Activated T-helper 1 cell treated with anti-CD3 and anti-CD28 coated beads, Interleukin-12 subunit alpha, Interleukin-12 subunit beta, Interleukin-2, Interleukin-4 antibody, amounts not matched to agents 30 ng/mL and 10 ng/mL and 1 ng/mL, durations not matched to agents 14 hours and 24 hours and 36 hours (primary cell): ENCODE measurements at regions of chr12 and their contacts with region 1.

Region 1: DNA sequence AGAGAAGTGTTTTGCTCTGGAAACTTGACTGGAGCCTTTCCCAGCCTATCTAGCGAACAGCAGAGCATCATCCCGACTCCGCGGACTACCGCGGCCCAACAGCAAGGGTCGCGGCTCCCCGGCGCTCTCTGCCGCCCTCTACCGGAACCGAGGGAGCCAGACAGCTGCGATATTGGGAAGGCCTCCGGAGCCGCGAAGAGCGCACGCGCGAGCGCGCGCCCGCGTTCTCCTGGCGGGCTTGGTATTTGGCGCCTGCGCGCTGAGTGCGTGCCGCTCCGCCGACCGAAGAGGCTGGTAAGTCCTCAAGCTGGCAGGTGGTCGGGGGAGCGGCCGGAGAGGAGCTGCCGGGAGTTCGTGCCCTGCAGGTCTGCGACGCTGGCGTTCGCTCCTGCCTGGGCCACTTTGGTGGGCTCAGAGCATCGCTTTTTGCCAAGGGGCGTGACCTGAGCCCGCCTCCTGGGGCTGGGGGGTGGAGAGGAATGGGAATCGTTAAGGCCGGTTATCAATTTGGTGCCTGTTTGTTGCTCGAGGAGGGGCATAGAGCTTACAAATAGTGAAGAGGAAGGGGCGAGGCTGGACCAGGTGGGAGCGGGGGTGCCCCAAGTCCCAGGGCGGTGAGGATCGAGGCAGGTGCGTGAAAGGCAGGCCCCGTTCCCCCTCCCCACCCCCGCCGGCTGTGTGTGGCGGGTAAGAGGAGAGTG is at the start of gene TMEM106C:
- DNase-seq: peak; percentile 90
- H3K4me3 Mint-ChIP-seq: peak within 1 kb of the TSS; percentile 99
- H3K27ac Mint-ChIP-seq: peak within 1 kb of the TSS; percentile 86
- H3K4me1 Mint-ChIP-seq: peaks cover 41% of the 10 kb centered on the region
- H3K27me3 Mint-ChIP-seq: peaks cover 17% of the 10 kb centered on the region
- total RNA-seq, gene TMEM106C: 139 and 143 TPM in 2 replicates

Region 2: GRCh38 chr12:47742253-47742825 is 221.2 kb before region 1 on chr12:
- intact Hi-C with region 1: loop called (anchors 1 kb)
- DNase-seq: peak; percentile 61
- H3K4me3 Mint-ChIP-seq: no peak overlapping the region
- H3K27ac Mint-ChIP-seq: no peak overlapping the region
- H3K4me1 Mint-ChIP-seq: peaks cover 6% of the 10 kb centered on the region
- H3K27me3 Mint-ChIP-seq: peaks cover 17% of the 10 kb centered on the region

Region 3: DNA sequence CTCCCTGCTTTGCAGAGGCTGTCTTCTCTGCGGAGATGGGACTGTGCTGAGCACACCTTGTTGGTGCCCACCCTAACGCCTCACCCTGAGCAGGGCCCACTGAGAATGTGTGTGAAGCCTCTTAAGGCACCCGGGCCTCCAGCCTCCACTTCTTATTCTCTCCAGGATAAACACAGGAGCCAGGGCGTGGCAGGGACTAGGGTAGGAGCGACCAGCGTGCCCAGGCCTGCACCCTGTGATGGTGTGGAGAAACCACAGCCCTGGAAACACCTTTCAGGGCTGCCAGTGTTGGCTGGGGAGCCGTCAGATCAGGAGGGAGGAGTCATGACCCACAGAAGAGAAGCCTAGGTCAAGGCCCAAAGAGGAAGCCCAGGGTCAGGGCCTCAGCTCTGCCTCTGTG is 100.0 kb before region 1 on chr12:
- intact Hi-C with region 1: loop called (anchors 1 kb)
- DNase-seq: no peak
- H3K4me3 Mint-ChIP-seq: no peak overlapping the region
- H3K27ac Mint-ChIP-seq: peak overlapping the region; percentile 80
- H3K4me1 Mint-ChIP-seq: peaks cover 92% of the 10 kb centered on the region
- H3K27me3 Mint-ChIP-seq: no peaks in the 10 kb centered on the region

Region 4: GRCh38 chr12:47904713-47905310 is 58.7 kb before region 1 on chr12 and contains the start of gene VDR:
- intact Hi-C with region 1: loop called (anchors 1 kb)
- DNase-seq: peak; percentile 62
- H3K4me3 Mint-ChIP-seq: peak within 1 kb of the TSS; percentile 100
- H3K27ac Mint-ChIP-seq: peak within 1 kb of the TSS; percentile 99
- H3K4me1 Mint-ChIP-seq: peaks cover 53% of the 10 kb centered on the region
- H3K27me3 Mint-ChIP-seq: peaks cover 34% of the 10 kb centered on the region
- total RNA-seq, gene VDR: 305 and 318 TPM in 2 replicates

Region 5: DNA sequence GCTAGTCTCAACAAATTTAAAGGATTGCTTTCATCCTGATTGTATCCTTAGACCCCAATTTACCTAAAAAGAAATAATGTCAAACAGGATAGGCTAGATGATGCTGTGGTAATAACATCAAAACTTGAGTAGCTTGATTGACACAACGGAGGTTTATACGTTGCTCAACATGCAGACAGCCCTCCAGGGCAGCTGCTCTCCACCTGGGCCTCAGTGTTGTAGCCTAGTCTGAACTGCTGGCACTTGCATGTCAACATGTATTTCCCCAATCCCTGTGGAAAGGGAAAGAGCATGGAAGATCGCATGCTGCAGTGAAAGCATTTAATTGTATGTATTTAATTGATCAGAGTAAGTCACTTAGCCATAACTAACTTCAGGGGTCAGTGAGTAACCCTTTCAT is 46.9 kb before region 1 on chr12:
- intact Hi-C with region 1: no loop called
- DNase-seq: no peak
- H3K4me3 Mint-ChIP-seq: no peak overlapping the region
- H3K27ac Mint-ChIP-seq: no peak overlapping the region
- H3K4me1 Mint-ChIP-seq: no peaks in the 10 kb centered on the region
- H3K27me3 Mint-ChIP-seq: peaks cover 38% of the 10 kb centered on the region

Region 6: GRCh38 chr12:48001505-48002413 is 38.3 kb after region 1 on chr12:
- intact Hi-C with region 1: loop called (anchors 2 kb)
- DNase-seq: no peak
- H3K4me3 Mint-ChIP-seq: peak overlapping the region; percentile 54
- H3K27ac Mint-ChIP-seq: peak overlapping the region; percentile 36
- H3K4me1 Mint-ChIP-seq: peaks cover 32% of the 10 kb centered on the region
- H3K27me3 Mint-ChIP-seq: peaks cover 87% of the 10 kb centered on the region

Region 7: GRCh38 chr12:48165094-48165981 is 201.8 kb after region 1 on chr12:
- intact Hi-C with region 1: loop called (anchors 1 kb)
- DNase-seq: peak; percentile 34
- H3K4me3 Mint-ChIP-seq: no peak overlapping the region
- H3K27ac Mint-ChIP-seq: no peak overlapping the region
- H3K4me1 Mint-ChIP-seq: peaks cover 6% of the 10 kb centered on the region
- H3K27me3 Mint-ChIP-seq: peaks cover 23% of the 10 kb centered on the region